Endothelial cell of umbilical vein (primary cell): ENCODE measurements at regions of chr1 and their contacts with region 1.

Region 1: GRCh38 chr1:26363549-26364448 is 8.8 kb downstream of the ZNF683 start:
- DNase-seq: peak; percentile 67
- H3K4me3 ChIP-seq: no peak overlapping the region
- H3K27ac ChIP-seq: no peak overlapping the region
- H3K4me1 ChIP-seq: no peaks in the 10 kb centered on the region
- H3K27me3 ChIP-seq: peaks cover 18 to 23% of the 10 kb centered on the region in 2 experiments
- CTCF ChIP-seq: peak; percentile 96 to 99
- POLR2A ChIP-seq: no peak

Region 2: DNA sequence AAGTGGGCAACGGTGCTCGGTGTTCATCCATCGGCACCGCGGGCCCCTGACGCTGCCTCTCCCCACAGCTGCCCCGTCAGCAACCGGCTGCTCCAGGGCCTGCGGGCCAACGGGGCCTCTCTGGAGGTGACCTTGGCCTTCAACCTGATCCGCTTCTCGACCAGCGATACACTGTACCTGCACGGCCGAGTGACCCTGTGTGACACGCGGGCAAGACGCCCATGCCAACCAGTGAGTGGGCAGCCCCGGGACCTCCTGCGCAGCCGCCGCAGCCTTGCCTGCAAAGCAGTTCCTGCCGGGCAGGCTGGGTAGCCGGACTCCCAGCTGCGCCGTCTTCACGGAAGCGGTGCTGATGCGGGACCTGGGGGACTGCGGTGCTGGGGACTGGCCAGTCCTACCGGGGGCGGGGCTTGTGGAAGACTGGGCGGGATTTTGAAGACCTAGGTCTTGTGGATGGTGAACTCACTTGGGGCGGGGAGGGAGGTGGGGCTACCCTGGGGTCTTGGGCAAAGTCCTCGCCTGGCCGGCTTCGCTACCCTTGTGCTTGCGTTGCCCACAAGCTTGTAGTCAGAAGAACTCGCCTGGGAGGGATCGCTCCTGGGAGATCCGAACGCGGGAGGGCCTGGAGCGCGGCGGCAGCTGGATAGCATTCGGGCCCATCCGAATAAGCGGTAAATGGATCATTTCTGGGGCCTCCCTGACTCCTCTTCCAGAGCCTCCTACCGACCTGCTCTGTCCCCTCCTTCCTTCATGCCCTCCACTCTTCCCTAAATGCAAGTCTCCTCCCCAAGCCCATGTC is 138.6 kb before region 1 on chr1:
- CTCF ChIA-PET with region 1: no interaction called
- POLR2A ChIA-PET with region 1: interaction called, 10 read pairs
- dilution Hi-C with region 1: no loop called
- intact Hi-C with region 1: no loop called
- DNase-seq: peak; percentile 49
- H3K4me3 ChIP-seq: peak overlapping the region; percentile 20 to 41 (median 37)
- H3K27ac ChIP-seq: no peak overlapping the region
- H3K4me1 ChIP-seq: peaks cover 5% of the 10 kb centered on the region
- H3K27me3 ChIP-seq: peaks cover 3 to 7% of the 10 kb centered on the region in 2 experiments
- CTCF ChIP-seq: no peak
- POLR2A ChIP-seq: no peak